ENCODE measurements at regions of chr3 and their contacts with region 1.

Region 1: DNA sequence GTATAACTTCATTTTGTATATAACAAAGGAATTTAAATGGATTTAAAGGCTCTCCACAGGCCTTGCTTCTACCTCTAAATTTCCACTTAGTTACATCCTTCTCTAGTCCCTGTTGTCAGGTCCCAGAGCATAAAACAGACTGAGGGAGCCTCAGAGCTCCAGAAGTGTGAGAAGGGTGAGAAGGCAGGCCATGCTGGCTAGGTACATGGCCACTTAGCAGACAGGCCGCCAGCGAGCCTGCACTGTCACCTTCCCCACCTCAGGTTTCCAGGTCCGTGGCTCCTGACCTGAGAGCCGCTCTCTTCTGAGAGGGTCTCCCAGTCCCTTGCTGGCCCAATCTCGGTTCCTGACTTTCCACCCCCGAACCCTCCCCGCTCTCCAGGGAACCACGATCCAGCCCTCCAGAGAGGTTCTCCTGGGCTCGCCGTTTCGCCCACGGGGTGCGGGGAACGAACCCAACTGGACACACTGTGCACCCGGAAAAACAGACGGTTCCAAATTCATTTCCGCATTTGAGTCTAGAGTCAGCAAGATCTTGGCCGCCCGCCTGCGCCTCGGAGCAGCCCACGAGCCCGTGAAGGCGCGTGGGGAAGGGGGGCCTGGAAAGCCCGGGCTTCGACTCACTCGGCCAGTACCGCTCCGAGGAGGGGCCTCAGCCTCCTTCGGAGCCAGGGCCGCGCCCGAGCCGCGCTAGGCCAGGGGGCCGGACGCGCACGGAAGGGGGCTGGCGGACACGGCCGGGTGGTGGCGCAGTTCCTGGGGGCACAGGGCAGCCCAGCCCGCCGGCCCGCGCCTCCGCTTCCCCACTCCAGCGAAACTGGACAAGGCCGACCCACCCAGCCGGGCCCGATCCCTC is 16.7 kb upstream of the SOX2 start:
- DNase-seq: no peak
- H3K4me3 Mint-ChIP-seq: no peak overlapping the region
- H3K27ac Mint-ChIP-seq: no peak overlapping the region
- H3K4me1 Mint-ChIP-seq: peaks cover under 1% of the 10 kb centered on the region
- H3K27me3 Mint-ChIP-seq: peaks cover 53% of the 10 kb centered on the region

Region 2: DNA sequence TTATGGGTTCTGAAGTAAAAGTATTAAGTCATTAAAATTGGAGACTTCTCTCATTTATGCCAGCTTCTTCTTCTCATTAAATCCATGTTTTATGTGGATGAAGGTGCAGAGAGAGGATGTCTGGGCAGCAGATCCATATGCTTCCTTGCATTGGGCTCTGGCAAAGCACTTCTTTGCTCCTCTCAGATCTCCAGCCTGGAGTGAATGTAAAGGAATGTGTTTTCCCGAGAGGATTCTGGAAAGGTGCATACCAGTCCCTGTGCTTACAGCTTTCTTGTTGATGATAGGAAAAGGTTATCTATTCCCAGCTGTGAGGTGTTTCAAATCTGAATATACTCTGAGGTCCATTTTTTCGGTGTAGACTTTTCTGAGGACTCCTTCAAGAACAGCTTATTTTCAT is 1578.4 kb before region 1 on chr3:
- intact Hi-C with region 1: no loop called
- DNase-seq: no peak
- H3K4me3 Mint-ChIP-seq: no peak overlapping the region
- H3K27ac Mint-ChIP-seq: no peak overlapping the region
- H3K4me1 Mint-ChIP-seq: no peaks in the 10 kb centered on the region
- H3K27me3 Mint-ChIP-seq: peaks cover 1% of the 10 kb centered on the region

Region 3: DNA sequence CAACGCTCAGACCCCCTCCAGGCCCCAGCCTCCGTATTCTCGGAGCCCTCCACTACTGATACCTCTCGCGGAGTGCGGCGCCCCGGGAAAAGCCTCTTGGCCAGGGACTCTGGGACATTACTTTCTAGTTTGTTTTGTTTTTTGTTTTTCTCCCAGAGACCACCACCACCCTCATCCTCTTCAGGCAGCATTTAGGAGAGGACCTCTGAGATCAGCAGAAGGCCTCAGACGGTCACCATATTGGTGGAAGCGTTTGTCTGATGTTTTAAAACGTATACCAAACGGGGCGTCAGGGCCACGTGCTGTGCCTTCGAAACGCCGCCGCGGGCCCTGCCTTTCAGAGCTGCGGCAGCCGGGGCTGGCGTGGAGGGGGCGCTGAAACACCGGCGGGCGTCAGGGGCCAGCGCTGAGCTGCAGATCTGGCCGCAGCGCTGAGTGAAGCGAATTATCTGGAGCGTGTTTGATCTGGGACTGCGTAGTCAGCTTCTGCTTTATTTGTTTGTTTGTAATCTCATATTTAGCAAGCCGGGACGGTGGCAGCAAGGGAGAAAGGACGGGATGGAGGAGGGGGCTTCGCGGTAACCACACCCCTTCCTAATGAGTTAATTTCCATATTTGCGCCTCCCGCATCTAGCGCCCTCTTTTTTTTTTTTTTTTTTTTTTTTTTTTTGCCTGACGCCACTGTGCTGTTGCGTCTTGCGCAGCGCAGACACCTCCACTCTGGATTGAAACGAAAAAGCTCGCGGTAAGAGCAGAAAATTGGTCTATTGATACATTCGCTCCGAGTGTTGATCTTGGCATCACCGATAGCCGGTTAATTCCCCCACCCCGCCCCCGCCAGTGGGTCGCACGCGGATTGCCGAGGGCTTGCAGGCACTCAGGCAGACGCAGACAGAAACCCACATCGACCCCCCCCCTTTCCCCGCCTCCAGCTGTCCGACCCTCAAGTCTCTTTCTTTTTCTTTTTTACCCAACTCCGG is 31.6 kb after region 1 on chr3:
- intact Hi-C with region 1: loop called (anchors 1 kb)
- DNase-seq: no peak
- H3K4me3 Mint-ChIP-seq: peak overlapping the region; percentile 51
- H3K27ac Mint-ChIP-seq: no peak overlapping the region
- H3K4me1 Mint-ChIP-seq: peaks cover 10% of the 10 kb centered on the region
- H3K27me3 Mint-ChIP-seq: peaks cover 73% of the 10 kb centered on the region

Measured in activated T-helper 1 cell treated with anti-CD3 and anti-CD28 coated beads, Interleukin-12 subunit alpha, Interleukin-12 subunit beta, Interleukin-2, Interleukin-4 antibody, amounts not matched to agents 30 ng/mL and 10 ng/mL and 1 ng/mL, durations not matched to agents 14 hours and 24 hours and 36 hours (primary cell).